SK-N-SH (cell line): ENCODE measurements at regions of chr17 and their contacts with region 1.

Region 1: DNA sequence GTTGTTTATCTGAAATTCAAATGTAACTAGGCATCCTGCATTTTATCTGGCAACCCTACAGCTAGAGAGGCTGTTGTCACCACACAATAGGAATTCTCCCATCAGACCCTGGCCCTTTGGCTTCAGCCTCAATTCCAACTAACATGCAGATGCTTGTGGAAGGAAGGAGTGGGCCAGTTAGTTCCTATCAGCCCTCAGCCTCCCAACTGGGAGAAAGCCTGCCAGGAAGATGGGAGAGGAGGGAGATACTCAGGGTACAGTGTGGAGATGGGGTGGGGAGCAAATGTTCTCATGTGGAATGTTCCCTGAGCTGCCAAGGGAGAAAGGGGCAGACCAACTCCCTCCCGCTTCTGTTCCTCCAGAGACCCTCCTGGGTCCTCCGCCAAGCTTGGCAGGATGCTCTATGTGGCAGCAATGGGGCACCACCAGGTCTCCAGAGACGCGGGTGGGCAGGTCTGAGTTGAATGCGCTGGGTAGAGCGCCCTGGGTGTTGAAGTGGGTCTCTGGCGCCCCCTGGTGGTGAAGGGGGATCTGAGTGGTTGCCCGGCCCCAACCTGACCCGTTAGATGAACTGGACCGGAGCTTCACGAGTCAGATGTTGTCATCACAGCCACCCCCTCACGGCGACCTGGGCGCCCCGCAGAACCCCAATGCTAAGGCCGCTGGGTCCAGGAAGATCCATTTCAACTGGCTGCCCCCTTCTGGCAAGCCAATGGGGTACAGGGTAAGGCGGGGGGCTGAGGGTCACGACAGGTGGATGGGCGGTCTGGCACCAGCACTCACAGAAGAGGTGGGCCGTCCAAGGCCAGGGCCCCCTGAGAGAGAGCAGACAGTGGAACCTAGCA is 15.2 kb downstream of the GALK1 start:
- DNase-seq: peak; percentile 94
- H3K4me3 ChIP-seq: peak overlapping the region in 1 of 2 experiments; percentile 30; a peak in 2 of 4 replicates
- H3K27ac ChIP-seq: no peak overlapping the region
- H3K4me1 ChIP-seq: peaks cover 0 to 23% of the 10 kb centered on the region in 2 experiments; a peak in 1 of 4 replicates
- H3K27me3 ChIP-seq: no peaks in the 10 kb centered on the region
- CTCF ChIP-seq: peak; percentile 99
- EP300 ChIP-seq: no peak
- RAD21 ChIP-seq: peak; percentile 82

Region 2: GRCh38 chr17:75601057-75602051 is 148.4 kb before region 1 on chr17:
- CTCF ChIA-PET with region 1: interaction called, 103 read pairs
- POLR2A ChIA-PET with region 1: no interaction called
- DNase-seq: peak; percentile 83
- H3K4me3 ChIP-seq: no peak overlapping the region
- H3K27ac ChIP-seq: no peak overlapping the region
- H3K4me1 ChIP-seq: no peaks in the 10 kb centered on the region
- H3K27me3 ChIP-seq: no peaks in the 10 kb centered on the region
- CTCF ChIP-seq: peak; percentile 92
- EP300 ChIP-seq: no peak
- RAD21 ChIP-seq: peak; percentile 41

Region 3: DNA sequence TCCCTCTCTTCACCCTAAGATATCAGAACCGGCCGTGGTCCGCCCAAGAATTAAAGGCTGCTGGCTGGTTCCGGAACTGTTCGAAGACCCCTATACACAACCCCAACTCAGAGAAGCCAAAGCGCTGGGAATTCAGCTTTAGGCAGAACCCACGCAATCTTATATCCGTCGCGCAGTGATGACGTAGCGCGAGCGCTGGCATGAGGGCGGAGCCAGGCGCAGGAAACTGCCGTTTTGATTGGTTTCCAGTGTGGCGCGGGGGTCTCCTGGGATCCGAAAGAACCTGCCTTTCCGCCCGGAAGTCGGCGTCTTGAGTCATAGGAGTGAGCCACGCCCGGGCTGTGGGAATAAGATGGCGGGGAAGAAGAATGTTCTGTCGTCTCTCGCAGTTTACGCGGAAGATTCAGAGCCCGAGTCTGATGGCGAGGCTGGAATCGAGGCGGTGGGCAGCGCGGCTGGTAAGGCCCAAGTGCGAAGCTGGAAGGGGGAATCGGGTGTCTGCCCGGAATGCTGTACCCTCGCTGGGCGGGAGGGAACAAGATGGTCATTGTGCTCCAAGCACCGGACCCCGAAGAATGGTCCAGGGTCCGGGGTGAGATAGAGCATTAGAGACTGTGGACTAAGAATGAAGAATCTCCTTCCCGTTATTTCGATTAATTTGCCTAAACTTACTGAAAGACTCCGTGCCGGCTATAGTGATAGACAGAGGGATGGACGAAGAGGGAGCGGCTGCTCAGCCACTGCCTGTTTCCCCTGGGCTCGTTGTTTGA is 82.6 kb before region 1 on chr17 and contains the starts of genes RECQL5 and SAP30BP:
- CTCF ChIA-PET with region 1: interaction called, 297 read pairs
- POLR2A ChIA-PET with region 1: interaction called, 4 read pairs
- DNase-seq: peak; percentile 96
- H3K4me3 ChIP-seq: peak within 1 kb of the TSS; percentile 94 to 97
- H3K27ac ChIP-seq: peak within 1 kb of the TSS; percentile 79 to 81
- H3K4me1 ChIP-seq: peaks cover 12 to 16% of the 10 kb centered on the region in 2 experiments; a peak in 3 of 4 replicates
- H3K27me3 ChIP-seq: no peaks in the 10 kb centered on the region
- CTCF ChIP-seq: no peak
- EP300 ChIP-seq: no peak
- RAD21 ChIP-seq: no peak
- polyA plus RNA-seq, gene RECQL5: 22.5 and 25.3 TPM in 2 replicates
- polyA plus RNA-seq, gene SAP30BP: 145 and 158 TPM in 2 replicates

Region 4: DNA sequence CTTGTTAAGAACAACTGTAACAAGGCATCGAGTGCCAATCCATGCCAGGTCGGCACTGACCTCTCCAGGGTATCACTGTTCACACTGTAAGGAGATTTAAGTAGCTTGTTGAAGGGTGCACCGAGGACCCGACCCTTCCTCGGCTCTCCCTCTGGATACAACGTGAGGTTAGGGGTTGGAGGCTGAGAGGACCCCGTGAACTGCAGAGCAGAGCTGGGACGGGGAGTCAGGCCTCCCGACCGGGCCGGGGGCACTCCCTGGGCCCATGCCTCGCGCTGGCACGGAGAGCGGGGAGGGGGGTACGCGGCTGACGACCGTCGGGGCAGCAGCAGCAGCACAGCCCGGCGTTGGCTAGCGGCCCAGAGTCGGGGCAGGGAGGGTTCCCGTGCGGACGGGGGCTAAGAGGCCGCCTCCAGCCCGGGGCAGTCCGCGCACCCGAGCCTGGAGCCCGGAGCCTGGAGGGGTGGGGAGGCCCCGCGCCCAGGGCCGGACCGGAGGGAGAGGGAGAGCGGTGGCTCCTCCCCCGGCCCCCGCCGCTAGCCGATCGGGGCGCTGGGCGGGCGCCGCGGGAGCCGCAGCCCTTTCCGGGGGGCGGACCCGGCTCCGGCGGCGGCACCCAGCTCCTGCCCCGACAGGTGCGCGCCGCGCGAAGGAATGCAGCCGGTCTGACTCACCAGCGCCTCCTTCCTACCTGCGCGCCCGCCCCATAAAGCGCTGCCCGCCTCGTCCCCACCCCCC is 28.9 kb before region 1 on chr17 and contains the start of gene ITGB4:
- CTCF ChIA-PET with region 1: interaction called, 419 read pairs
- POLR2A ChIA-PET with region 1: no interaction called
- DNase-seq: peak; percentile 88
- H3K4me3 ChIP-seq: peak within 1 kb of the TSS; percentile 46 to 50
- H3K27ac ChIP-seq: no peak within 1 kb of the TSS
- H3K4me1 ChIP-seq: peaks cover 0 to 4% of the 10 kb centered on the region in 2 experiments; a peak in 1 of 4 replicates
- H3K27me3 ChIP-seq: peaks cover 44% of the 10 kb centered on the region
- CTCF ChIP-seq: no peak
- EP300 ChIP-seq: no peak
- RAD21 ChIP-seq: no peak
- polyA plus RNA-seq, gene ITGB4: 3.6 and 7.0 TPM in 2 replicates

Region 5: DNA sequence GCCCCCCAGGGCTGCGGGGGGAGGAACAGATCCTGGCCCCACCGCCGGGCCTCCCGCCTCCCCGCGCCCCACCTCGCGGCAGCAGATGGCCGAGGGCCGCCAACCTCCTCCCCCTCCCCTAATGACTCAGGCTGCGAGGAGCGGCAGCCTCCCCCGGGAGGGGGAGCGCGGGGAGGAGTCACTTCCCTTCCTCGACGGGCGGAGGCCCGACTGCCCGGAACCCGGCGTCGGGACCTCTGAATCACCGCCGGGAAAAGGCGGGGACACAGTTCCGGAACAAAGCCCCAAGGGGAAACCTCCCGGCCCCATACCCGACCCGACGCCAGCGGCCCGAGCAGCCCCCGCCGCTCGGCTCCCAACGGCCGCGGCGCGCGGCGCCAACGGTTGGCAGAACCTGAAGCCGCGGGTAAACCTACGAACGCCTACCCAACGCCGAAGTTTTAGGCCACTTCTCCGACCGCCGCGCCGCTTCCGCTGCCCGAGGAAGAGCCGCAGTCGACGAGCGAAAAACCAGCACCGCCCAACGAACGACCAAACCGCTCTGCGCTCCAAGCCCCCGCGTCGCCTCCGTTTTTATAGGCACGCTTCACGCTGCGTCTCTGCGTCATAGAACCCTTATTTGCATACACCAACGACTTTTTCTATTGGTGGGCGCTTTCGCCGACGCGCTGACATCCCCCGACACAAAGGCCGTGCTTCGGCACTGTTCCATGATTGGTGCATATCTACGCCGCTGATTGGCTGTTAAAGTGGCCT is 29.6 kb after region 1 on chr17:
- CTCF ChIA-PET with region 1: interaction called, 41 read pairs
- POLR2A ChIA-PET with region 1: interaction called, 52 read pairs
- DNase-seq: peak; percentile 95
- H3K4me3 ChIP-seq: peak overlapping the region; percentile 90 to 94
- H3K27ac ChIP-seq: peak overlapping the region; percentile 97
- H3K4me1 ChIP-seq: peaks cover 18 to 25% of the 10 kb centered on the region in 2 experiments
- H3K27me3 ChIP-seq: no peaks in the 10 kb centered on the region
- CTCF ChIP-seq: 0 out of 2 replicates have a peak, but pooled peaks have one; percentile 7
- EP300 ChIP-seq: 0 out of 4 replicates have a peak, but pooled peaks of 1 of the 2 experiments have one; percentile 23
- RAD21 ChIP-seq: no peak

Region 6: GRCh38 chr17:75822119-75822799 is 72.5 kb after region 1 on chr17:
- CTCF ChIA-PET with region 1: interaction called, 63 read pairs
- POLR2A ChIA-PET with region 1: interaction called, 7 read pairs
- DNase-seq: peak; percentile 71
- H3K4me3 ChIP-seq: no peak overlapping the region
- H3K27ac ChIP-seq: peak overlapping the region in 1 of 2 experiments; percentile 57; a peak in 1 of 4 replicates
- H3K4me1 ChIP-seq: peaks cover 0 to 32% of the 10 kb centered on the region in 2 experiments; a peak in 1 of 4 replicates
- H3K27me3 ChIP-seq: no peaks in the 10 kb centered on the region
- CTCF ChIP-seq: no peak
- EP300 ChIP-seq: no peak
- RAD21 ChIP-seq: no peak